Pancreas (tissue), 10 donors: ENCODE measurements at regions of chr11 and their contacts with region 1.

Region 1: DNA sequence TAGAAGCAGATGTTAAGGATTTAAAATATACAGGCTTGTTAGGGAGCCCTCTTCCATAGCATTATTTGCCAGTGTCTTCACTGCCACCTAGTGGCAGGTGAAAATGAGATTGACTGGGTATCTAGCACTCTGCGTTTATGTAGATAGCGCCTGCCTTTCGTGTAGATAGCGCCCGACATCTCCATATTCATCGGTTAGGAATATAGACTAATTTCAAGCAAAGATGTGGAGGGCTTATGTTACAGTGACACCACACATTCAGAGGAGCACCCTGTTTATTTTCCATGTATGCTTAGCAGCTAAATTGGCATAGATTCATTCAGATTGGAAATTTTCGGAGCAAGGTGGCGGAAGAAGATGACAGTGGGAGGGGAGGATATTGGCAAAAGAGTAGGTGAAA is 72.0 kb downstream of the SLC5A12 start:
- DNase-seq: peak in 4 of 6 donors; percentile 39 to 68 (median 51)
- ATAC-seq: peak; percentile 73 to 94 (median 90)
- H3K4me3 ChIP-seq: no peak overlapping the region
- H3K27ac ChIP-seq: no peak overlapping the region
- H3K4me1 ChIP-seq: no peaks in the 10 kb centered on the region
- H3K27me3 ChIP-seq: peaks cover 0 to 11% (median 2%) of the 10 kb centered on the region in 4 donors
- CTCF ChIP-seq: peak; percentile 24 to 67 (median 53)

Region 2: GRCh38 chr11:26297189-26297975 is 352.5 kb before region 1 on chr11:
- intact Hi-C with region 1: loop called in 2 of 3 experiments (anchors 10 kb)
- DNase-seq: peak in 1 of 6 donors; percentile 16
- ATAC-seq: peak; percentile 67 to 93 (median 90)
- H3K4me3 ChIP-seq: no peak overlapping the region
- H3K27ac ChIP-seq: no peak overlapping the region
- H3K4me1 ChIP-seq: no peaks in the 10 kb centered on the region
- H3K27me3 ChIP-seq: no peaks in the 10 kb centered on the region
- CTCF ChIP-seq: peak in 3 of 4 donors; percentile 33 to 58 (median 41)